PC-9 (cell line): ENCODE measurements at regions of chr3 and their contacts with region 1.

Region 1: GRCh38 chr3:100316641-100317069 is 17.9 kb upstream of the NIT2 start:
- DNase-seq: peak; percentile 33 to 59
- H3K4me3 ChIP-seq: no peak overlapping the region
- H3K27ac ChIP-seq: no peak overlapping the region
- H3K4me1 ChIP-seq: no peaks in the 10 kb centered on the region
- H3K27me3 ChIP-seq: no peaks in the 10 kb centered on the region
- CTCF ChIP-seq: peak; percentile 93

Region 2: DNA sequence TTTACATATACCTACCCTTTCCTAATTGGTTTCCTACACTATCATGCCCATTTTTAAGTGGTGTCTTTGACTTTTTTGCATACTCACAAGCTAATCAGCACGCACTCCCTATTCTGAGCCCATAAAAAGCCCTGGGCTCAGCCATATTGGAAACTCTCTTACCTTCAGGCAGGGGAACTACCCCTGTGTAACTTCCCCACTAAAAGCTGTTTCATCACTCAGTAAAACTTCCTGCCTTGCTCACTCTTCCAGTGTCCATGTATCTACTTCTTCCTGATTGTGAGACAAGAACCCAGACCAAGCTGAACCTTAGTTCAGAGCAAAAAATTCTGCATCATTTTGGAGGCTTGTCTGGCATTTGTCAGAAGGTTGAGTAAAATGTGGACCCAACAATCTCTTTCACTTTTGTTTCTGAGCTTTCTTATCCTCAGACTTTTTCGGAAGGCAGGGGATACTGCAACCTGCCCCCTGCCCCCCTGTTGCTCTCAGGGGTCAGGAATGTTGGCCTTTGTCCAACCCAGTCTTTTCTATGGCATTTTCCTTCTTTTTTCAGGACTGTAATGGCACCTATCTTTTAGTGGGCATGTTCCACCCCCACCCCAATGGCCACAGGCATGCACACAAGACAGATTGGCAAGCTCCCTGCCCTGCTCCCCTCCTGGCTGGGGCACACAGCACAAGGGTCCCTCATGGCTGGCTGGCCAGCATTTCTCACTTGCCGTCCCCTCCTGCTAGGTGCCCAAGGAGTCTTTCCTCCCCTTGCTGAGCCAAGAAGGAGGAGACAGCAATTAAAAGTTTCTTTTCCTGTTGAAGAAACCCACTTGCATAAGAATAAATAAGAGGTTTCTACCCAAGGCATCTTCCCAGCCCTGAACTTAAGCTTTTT is 149.5 kb after region 1 on chr3:
- CTCF ChIA-PET with region 1: no interaction called
- POLR2A ChIA-PET with region 1: no interaction called
- intact Hi-C with region 1: no loop called
- DNase-seq: no peak
- H3K4me3 ChIP-seq: no peak overlapping the region
- H3K27ac ChIP-seq: no peak overlapping the region
- H3K4me1 ChIP-seq: no peaks in the 10 kb centered on the region
- H3K27me3 ChIP-seq: no peaks in the 10 kb centered on the region
- CTCF ChIP-seq: no peak

Region 3: GRCh38 chr3:100719136-100719535 is 402.5 kb after region 1 on chr3:
- CTCF ChIA-PET with region 1: no interaction called
- POLR2A ChIA-PET with region 1: no interaction called
- intact Hi-C with region 1: loop called (anchors 5 kb)
- DNase-seq: no peak
- H3K4me3 ChIP-seq: no peak overlapping the region
- H3K27ac ChIP-seq: no peak overlapping the region
- H3K4me1 ChIP-seq: no peaks in the 10 kb centered on the region
- H3K27me3 ChIP-seq: no peaks in the 10 kb centered on the region
- CTCF ChIP-seq: no peak

Region 4: GRCh38 chr3:100796556-100796955 is 479.9 kb after region 1 on chr3:
- CTCF ChIA-PET with region 1: no interaction called
- POLR2A ChIA-PET with region 1: interaction called, 31 read pairs
- intact Hi-C with region 1: loop called (anchors 1 kb)
- DNase-seq: no peak
- H3K4me3 ChIP-seq: no peak overlapping the region
- H3K27ac ChIP-seq: no peak overlapping the region
- H3K4me1 ChIP-seq: no peaks in the 10 kb centered on the region
- H3K27me3 ChIP-seq: no peaks in the 10 kb centered on the region
- CTCF ChIP-seq: peak; percentile 46; the same call in 1 of the 2 replicates